Left cardiac atrium (tissue), 4 donors: ENCODE measurements at regions of chr3 and their contacts with region 1.

Region 1: GRCh38 chr3:48088749-48089466 is 72.7 kb upstream of the MAP4 start:
- DNase-seq: peak; percentile 97
- ATAC-seq: peak; percentile 96

Region 2: DNA sequence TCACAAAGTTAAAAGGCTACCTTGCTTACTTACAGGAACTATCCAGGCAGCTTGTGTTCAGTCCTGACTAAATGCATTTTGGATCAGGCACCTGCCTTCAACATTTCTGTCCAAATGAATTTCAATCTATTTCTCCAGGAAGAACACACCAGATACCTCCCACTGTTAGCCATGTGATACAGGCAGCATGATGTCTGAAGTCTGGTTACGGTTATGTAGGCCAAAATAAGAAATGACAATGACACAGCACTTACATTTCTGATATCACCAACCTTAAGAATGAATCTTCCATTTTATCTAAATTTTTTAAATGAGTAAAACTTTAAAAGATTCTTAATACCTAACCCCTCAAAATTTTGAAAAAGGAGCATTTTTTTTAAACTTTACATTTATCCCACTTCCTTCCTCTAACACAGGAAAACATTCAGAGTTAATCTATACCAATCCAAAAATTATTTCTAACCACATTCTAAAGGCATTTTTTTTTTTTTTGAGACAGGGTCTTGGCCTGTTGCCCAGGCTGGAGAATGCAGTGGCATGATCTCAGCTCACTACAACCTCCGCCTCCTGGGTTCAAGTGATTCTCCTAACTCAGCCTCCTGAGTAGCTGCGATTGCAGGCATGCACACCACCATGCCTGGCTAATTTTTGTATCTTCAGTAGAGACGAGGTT is 72.5 kb before region 1 on chr3 and contains the start of gene MAP4:
- intact Hi-C with region 1: loop called in 1 of 2 experiments (anchors 5 kb)
- DNase-seq: no peak
- ATAC-seq: no peak
- total RNA-seq, gene MAP4: 328 to 374 TPM

Region 3: GRCh38 chr3:48142316-48142870 is 53.5 kb after region 1 on chr3:
- intact Hi-C with region 1: loop called in 1 of 2 experiments (anchors 10 kb)
- DNase-seq: no peak
- ATAC-seq: no peak

Region 4: DNA sequence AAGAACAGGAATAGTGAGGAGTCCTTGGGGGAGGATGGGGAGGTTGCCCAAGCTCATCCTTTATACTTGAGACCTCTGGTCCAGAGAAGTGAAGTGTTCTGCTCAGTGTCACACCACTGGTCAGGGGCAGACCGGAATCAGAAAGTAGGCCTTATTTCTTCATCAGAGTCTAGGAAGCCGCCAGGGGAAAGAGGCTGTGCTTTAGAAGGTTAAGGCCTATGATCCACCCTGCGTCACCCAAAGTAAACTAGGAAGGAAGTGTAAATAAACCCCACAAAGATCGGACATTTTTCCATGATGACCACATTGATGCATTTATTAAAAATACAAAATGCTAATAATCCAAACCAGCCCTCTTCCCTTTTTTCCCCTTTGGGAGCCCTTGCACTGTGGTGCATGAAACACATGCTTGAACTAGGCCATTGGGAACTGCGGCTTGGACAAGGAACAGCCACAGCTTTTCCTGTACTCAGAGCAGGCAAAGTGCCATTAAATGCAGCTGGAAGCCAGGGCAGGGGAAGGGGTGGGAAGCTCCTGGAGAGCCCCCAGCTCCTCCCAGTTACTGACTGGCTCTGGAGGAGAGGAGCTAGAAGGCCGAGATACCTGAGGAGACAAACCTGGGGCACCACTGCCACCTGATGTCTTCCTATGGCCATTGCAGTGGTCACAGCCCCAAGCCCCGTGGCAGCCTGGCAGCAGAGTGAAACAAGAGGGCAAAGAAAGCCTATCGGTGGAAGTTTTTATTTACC is 62.3 kb after region 1 on chr3:
- intact Hi-C with region 1: loop called (anchors 2 to 10 kb)
- DNase-seq: peak; percentile 80
- ATAC-seq: peak; percentile 97